ENCODE measurements at regions of chr14 and their contacts with region 1.

Region 1: GRCh38 chr14:77654001-77654441 is 37.6 kb upstream of the SPTLC2 start:
- DNase-seq: peak in 1 of 2 experiments; percentile 55
- H3K4me3 ChIP-seq: no peak overlapping the region
- H3K27ac ChIP-seq: no peak overlapping the region
- H3K4me1 ChIP-seq: peaks cover 3 to 15% (median 10%) of the 10 kb centered on the region in 4 experiments; a peak in 6 of 7 replicates
- H3K27me3 ChIP-seq: no peaks in the 10 kb centered on the region
- CTCF ChIP-seq: no peak
- EP300 ChIP-seq: no peak
- POLR2A ChIP-seq: no peak
- RAD21 ChIP-seq: no peak

Region 2: GRCh38 chr14:77339407-77339806 is 314.6 kb before region 1 on chr14:
- CTCF ChIA-PET with region 1: no interaction called
- POLR2A ChIA-PET with region 1: no interaction called
- DNase-seq: no peak
- H3K4me3 ChIP-seq: no peak overlapping the region
- H3K27ac ChIP-seq: no peak overlapping the region
- H3K4me1 ChIP-seq: peaks cover 5 to 19% (median 10%) of the 10 kb centered on the region in 4 experiments
- H3K27me3 ChIP-seq: no peaks in the 10 kb centered on the region
- CTCF ChIP-seq: no peak
- EP300 ChIP-seq: no peak
- POLR2A ChIP-seq: no peak
- RAD21 ChIP-seq: no peak

Region 3: DNA sequence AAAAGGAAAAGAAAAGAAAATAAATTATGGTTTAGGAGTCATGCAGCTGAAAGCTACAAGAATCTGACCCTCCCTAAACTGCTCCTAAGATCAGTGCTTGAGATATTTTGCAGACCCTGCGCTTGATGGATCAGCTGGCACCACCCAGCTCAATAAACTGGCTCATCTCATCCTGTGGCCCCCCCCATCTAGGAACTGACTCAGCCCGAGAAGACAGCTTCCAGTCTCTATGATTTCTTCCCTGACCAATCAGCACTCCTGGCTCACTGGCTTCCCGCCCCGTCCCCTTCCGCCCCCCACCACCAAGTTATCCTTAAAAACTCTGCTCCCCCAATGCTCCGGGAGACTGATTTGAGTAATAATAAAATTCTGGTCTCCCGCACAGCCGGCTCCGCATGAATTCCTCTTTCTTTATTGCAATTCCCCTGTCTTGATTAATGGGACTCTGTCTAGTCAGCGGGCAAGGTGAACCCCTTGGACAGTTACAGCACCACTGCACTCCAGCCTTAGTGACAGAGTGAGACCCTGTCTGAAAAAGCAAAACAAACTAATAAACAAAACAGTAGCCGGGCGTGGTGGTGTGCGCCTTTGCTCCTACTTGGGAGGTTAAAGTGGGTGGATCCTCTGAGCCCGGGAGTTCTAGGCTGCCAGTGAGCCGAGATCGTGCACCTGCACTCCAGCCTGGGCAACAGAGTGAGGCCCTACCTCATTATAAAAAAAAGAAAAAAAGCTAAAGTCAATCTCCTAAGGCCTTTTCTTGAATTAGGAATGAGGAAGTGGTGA is 13.1 kb before region 1 on chr14:
- CTCF ChIA-PET with region 1: interaction called, 12 read pairs
- POLR2A ChIA-PET with region 1: interaction called, 3 read pairs
- DNase-seq: no peak
- H3K4me3 ChIP-seq: no peak overlapping the region
- H3K27ac ChIP-seq: no peak overlapping the region
- H3K4me1 ChIP-seq: no peaks in the 10 kb centered on the region
- H3K27me3 ChIP-seq: no peaks in the 10 kb centered on the region
- CTCF ChIP-seq: no peak
- EP300 ChIP-seq: no peak
- POLR2A ChIP-seq: no peak
- RAD21 ChIP-seq: no peak

Region 4: DNA sequence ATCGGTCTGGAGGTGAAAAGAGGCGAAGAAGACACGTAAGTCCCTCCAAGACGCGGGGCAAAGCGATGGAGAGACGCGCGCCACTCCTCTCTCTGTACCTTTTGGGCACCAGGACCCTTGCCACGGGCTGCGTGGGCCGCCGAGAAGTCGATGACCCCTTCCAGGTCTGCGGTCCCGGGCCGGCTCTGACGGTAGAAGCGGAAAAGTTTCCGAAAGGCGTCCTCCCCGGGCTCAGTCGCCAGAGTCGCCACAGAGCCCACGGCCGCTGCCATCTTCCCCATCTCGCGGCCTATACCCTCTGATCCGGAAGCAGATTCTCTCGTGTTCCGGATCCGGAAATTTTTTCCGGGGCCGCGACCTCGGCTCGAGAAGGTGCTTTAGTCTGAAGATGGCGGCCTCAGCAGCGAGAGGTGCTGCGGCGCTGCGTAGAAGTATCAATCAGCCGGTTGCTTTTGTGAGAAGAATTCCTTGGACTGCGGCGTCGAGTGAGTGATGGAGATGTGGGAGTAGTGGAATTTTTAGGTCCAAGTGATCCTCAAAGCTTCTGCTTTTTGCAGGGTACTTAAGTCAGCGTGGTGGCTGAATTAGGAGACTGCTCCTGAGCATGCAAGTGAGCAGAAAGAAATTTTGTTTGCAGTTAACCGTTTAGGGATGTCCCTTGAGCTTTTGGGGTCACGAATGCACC is 53.8 kb after region 1 on chr14 and contains the starts of genes ALKBH1 and SLIRP:
- CTCF ChIA-PET with region 1: interaction called, 25 read pairs
- POLR2A ChIA-PET with region 1: interaction called, 4 read pairs
- DNase-seq: peak; percentile 36 to 83
- H3K4me3 ChIP-seq: peak within 1 kb of the TSS; percentile 68 to 98 (median 94)
- H3K27ac ChIP-seq: peak within 1 kb of the TSS; percentile 85
- H3K4me1 ChIP-seq: peaks cover 0 to 2% (median 1%) of the 10 kb centered on the region in 4 experiments; a peak in 2 of 7 replicates
- H3K27me3 ChIP-seq: no peaks in the 10 kb centered on the region
- CTCF ChIP-seq: 0 out of 4 replicates have a peak, but pooled peaks of 1 of the 3 experiments have one; percentile 0
- EP300 ChIP-seq: no peak
- POLR2A ChIP-seq: peak; percentile 93 to 94
- RAD21 ChIP-seq: no peak
- total RNA-seq, gene ALKBH1: 19.9 and 20.0 TPM in 2 replicates
- total RNA-seq, gene SLIRP: 356 and 383 TPM in 2 replicates

Region 5: GRCh38 chr14:77714926-77715325 is 60.9 kb after region 1 on chr14:
- CTCF ChIA-PET with region 1: interaction called, 11 read pairs
- POLR2A ChIA-PET with region 1: interaction called, 4 read pairs
- DNase-seq: no peak
- H3K4me3 ChIP-seq: no peak overlapping the region
- H3K27ac ChIP-seq: no peak overlapping the region
- H3K4me1 ChIP-seq: no peaks in the 10 kb centered on the region
- H3K27me3 ChIP-seq: no peaks in the 10 kb centered on the region
- CTCF ChIP-seq: no peak
- EP300 ChIP-seq: no peak
- POLR2A ChIP-seq: no peak
- RAD21 ChIP-seq: no peak

Region 6: DNA sequence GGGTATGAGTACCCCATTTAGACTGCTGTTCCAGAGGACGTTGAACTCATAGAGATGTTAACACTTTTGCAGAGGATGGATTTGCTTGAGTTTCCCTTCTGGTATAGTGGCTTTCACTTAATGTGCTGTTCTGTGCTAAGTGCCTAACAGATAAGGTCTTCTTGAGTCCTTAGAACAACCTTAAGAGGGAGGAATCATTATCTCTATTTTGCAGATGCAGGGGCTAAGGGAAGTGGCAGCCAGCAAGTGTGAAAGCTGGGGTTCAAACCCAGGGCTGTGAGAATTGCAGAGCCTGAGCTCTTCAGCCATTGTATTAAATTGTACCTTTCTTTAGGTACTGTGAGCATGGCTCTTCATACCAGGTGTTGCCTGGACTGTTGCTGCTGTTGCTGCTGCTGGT is 394.1 kb after region 1 on chr14:
- CTCF ChIA-PET with region 1: no interaction called
- POLR2A ChIA-PET with region 1: no interaction called
- DNase-seq: no peak
- H3K4me3 ChIP-seq: no peak overlapping the region
- H3K27ac ChIP-seq: no peak overlapping the region
- H3K4me1 ChIP-seq: no peaks in the 10 kb centered on the region
- H3K27me3 ChIP-seq: no peaks in the 10 kb centered on the region
- CTCF ChIP-seq: no peak
- EP300 ChIP-seq: no peak
- POLR2A ChIP-seq: no peak
- RAD21 ChIP-seq: no peak